ENCODE measurements at regions of chr19 and their contacts with region 1.

Region 1: GRCh38 chr19:48795055-48795684 is 15.7 kb downstream of the BCAT2 start:
- DNase-seq: peak; percentile 84
- H3K4me3 ChIP-seq: peak overlapping the region; percentile 63
- H3K27ac ChIP-seq: peak overlapping the region; percentile 87
- H3K27me3 ChIP-seq: no peaks in the 10 kb centered on the region
- CTCF ChIP-seq: peak; percentile 95

Region 2: GRCh38 chr19:48780631-48781391 is 14.4 kb before region 1 on chr19:
- CTCF ChIA-PET with region 1: interaction called, 11 read pairs
- POLR2A ChIA-PET with region 1: interaction called, 4 read pairs
- DNase-seq: no peak
- H3K4me3 ChIP-seq: no peak overlapping the region
- H3K27ac ChIP-seq: no peak overlapping the region
- H3K27me3 ChIP-seq: peaks cover 4% of the 10 kb centered on the region
- CTCF ChIP-seq: no peak

Measured in AG04450 (cell line).